ENCODE measurements at regions of chr1 and their contacts with region 1.

Region 1: DNA sequence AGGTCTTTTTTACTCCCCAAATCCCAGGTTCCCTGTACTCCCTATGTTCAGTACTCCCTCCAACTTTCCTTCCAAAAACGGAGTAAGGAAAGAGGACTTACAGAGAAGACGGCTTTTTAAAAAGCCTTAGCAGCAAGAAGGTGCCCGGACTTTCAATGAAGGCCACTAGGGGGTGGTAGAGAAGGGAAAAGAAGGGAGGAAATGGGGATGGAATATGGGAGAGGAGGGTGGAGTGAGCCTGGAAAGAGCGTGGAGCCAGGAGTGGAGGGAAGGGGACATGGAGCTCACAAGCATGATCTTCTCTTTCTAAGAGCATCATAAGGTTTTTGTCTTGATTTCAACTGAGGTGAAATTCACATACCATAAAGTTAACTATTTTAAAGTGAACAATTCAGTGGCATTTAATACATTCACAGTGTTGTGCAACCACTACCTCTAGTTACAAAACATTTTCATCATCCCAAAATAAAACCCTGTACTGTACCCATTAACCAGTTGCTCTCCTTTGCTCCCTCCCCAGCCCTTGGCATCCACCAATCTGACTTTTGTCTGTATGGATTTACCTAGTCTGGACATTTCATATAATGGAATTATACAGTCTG is 129.9 kb downstream of the ZNF281 start:
- DNase-seq: peak; percentile 55
- ATAC-seq: peak; percentile 97
- H3K4me3 ChIP-seq: no peak overlapping the region
- H3K27ac ChIP-seq: no peak overlapping the region
- H3K4me1 ChIP-seq: no peaks in the 10 kb centered on the region
- H3K27me3 ChIP-seq: no peaks in the 10 kb centered on the region
- CTCF ChIP-seq: peak; percentile 69 to 88 (median 79)
- POLR2A ChIP-seq: no peak
- RAD21 ChIP-seq: peak; percentile 89

Region 2: GRCh38 chr1:199545780-199546179 is 734.1 kb before region 1 on chr1:
- CTCF ChIA-PET with region 1: no interaction called
- POLR2A ChIA-PET with region 1: no interaction called
- RAD21 ChIA-PET with region 1: interaction called in 1 of 2 experiments, 3 read pairs
- intact Hi-C with region 1: loop called (anchors 10 kb)
- DNase-seq: peak; percentile 26
- ATAC-seq: peak; percentile 85
- H3K4me3 ChIP-seq: no peak overlapping the region
- H3K27ac ChIP-seq: no peak overlapping the region
- H3K4me1 ChIP-seq: no peaks in the 10 kb centered on the region
- H3K27me3 ChIP-seq: no peaks in the 10 kb centered on the region
- CTCF ChIP-seq: peak; percentile 12 to 62 (median 55); a peak in 4 of 6 replicates
- POLR2A ChIP-seq: no peak
- RAD21 ChIP-seq: peak; percentile 65

Region 3: GRCh38 chr1:199774433-199775089 is 505.4 kb before region 1 on chr1:
- CTCF ChIA-PET with region 1: no interaction called
- POLR2A ChIA-PET with region 1: no interaction called
- RAD21 ChIA-PET with region 1: no interaction called
- intact Hi-C with region 1: no loop called
- DNase-seq: no peak
- ATAC-seq: no peak
- H3K4me3 ChIP-seq: no peak overlapping the region
- H3K27ac ChIP-seq: no peak overlapping the region
- H3K4me1 ChIP-seq: peaks cover 13 to 19% of the 10 kb centered on the region in 2 experiments; a peak in 3 of 4 replicates
- H3K27me3 ChIP-seq: no peaks in the 10 kb centered on the region
- CTCF ChIP-seq: no peak
- POLR2A ChIP-seq: no peak
- RAD21 ChIP-seq: no peak